Activated CD8-positive, alpha-beta T cell treated with anti-CD3 and anti-CD28 coated beads for 36 hours (primary cell): ENCODE measurements at regions of chr9 and their contacts with region 1.

Region 1: GRCh38 chr9:95167998-95168397 is 149.5 kb downstream of the FANCC start:
- DNase-seq: peak; percentile 77
- ATAC-seq: peak; percentile 83
- H3K4me3 Mint-ChIP-seq: no peak overlapping the region
- H3K27ac Mint-ChIP-seq: no peak overlapping the region
- H3K4me1 Mint-ChIP-seq: peaks cover 18% of the 10 kb centered on the region
- H3K27me3 Mint-ChIP-seq: no peaks in the 10 kb centered on the region
- CTCF ChIP-seq: peak; percentile 85

Region 2: GRCh38 chr9:95018099-95018936 is 149.7 kb before region 1 on chr9:
- CTCF ChIA-PET with region 1: no interaction called
- POLR2A ChIA-PET with region 1: no interaction called
- intact Hi-C with region 1: no loop called
- DNase-seq: peak; percentile 57
- ATAC-seq: peak; percentile 86
- H3K4me3 Mint-ChIP-seq: no peak overlapping the region
- H3K27ac Mint-ChIP-seq: no peak overlapping the region
- H3K4me1 Mint-ChIP-seq: peaks cover 2% of the 10 kb centered on the region
- H3K27me3 Mint-ChIP-seq: no peaks in the 10 kb centered on the region
- CTCF ChIP-seq: no peak

Region 3: GRCh38 chr9:95157481-95158151 is 10.4 kb before region 1 on chr9:
- CTCF ChIA-PET with region 1: interaction called, 27 read pairs
- POLR2A ChIA-PET with region 1: no interaction called
- intact Hi-C with region 1: no loop called
- DNase-seq: no peak
- ATAC-seq: no peak
- H3K4me3 Mint-ChIP-seq: no peak overlapping the region
- H3K27ac Mint-ChIP-seq: no peak overlapping the region
- H3K4me1 Mint-ChIP-seq: peaks cover 11% of the 10 kb centered on the region
- H3K27me3 Mint-ChIP-seq: no peaks in the 10 kb centered on the region
- CTCF ChIP-seq: no peak

Region 4: DNA sequence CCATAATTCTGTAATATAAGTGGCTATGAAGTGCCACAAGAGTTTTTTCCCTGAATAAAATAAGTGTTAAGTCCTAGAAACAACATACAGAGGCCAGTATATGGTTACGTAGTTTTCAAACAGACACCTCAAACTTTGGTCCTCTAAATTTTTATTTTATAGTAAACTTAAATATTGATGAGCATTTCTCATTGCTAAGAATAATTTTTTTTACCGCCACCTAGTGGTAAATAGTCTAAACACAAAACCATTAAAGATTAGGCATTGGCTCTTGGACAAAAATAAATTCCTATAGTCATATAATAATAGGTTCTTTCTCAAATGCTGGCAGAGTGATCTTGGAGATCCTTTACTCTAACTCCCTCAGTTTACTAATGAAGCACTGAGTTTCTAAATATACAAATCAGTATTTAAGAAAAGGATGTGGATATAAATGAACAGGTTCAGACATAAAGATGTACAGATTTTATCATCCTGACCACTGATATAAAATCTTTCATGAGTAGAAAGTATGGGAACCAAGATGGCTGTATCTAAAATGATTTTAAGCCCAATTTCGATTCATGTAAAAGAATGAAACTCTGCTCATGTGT is 13.3 kb after region 1 on chr9:
- CTCF ChIA-PET with region 1: interaction called, 20 read pairs
- POLR2A ChIA-PET with region 1: no interaction called
- intact Hi-C with region 1: no loop called
- DNase-seq: no peak
- ATAC-seq: no peak
- H3K4me3 Mint-ChIP-seq: no peak overlapping the region
- H3K27ac Mint-ChIP-seq: no peak overlapping the region
- H3K4me1 Mint-ChIP-seq: no peaks in the 10 kb centered on the region
- H3K27me3 Mint-ChIP-seq: no peaks in the 10 kb centered on the region
- CTCF ChIP-seq: peak; percentile 60

Region 5: GRCh38 chr9:95284150-95285080 is 116.4 kb after region 1 on chr9:
- CTCF ChIA-PET with region 1: no interaction called
- POLR2A ChIA-PET with region 1: no interaction called
- intact Hi-C with region 1: no loop called
- DNase-seq: no peak
- ATAC-seq: no peak
- H3K4me3 Mint-ChIP-seq: no peak overlapping the region
- H3K27ac Mint-ChIP-seq: no peak overlapping the region
- H3K4me1 Mint-ChIP-seq: peaks cover 2% of the 10 kb centered on the region
- H3K27me3 Mint-ChIP-seq: no peaks in the 10 kb centered on the region
- CTCF ChIP-seq: no peak